ENCODE measurements at regions of chr17 and their contacts with region 1.

Region 1: GRCh38 chr17:76397687-76398487 is 13.5 kb downstream of the SPHK1 start:
- DNase-seq: peak; percentile 68
- ATAC-seq: peak; percentile 91
- H3K4me3 ChIP-seq: no peak overlapping the region
- H3K27ac ChIP-seq: no peak overlapping the region
- H3K4me1 ChIP-seq: no peaks in the 10 kb centered on the region
- H3K27me3 ChIP-seq: no peaks in the 10 kb centered on the region
- CTCF ChIP-seq: peak; percentile 87 to 100 (median 99)
- POLR2A ChIP-seq: no peak
- RAD21 ChIP-seq: peak; percentile 90

Region 2: DNA sequence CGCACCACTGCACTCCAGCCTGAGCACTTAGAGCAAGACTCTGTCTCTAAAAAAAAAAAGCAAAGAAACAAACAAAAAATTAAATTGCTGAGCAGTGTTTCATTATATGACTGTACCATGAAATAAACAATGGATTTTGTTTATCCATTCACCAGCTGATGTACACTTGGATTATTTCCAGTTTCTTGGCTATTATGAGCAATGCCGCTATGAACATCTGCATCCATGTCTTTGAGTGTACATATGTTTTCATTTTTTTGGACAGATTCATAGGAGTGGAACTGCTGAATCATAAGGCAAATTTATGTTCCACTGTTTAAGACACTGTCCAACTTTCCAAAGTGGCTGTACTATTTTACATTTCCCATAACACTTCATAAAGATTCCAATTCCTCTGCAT is 165.5 kb before region 1 on chr17:
- CTCF ChIA-PET with region 1: no interaction called
- POLR2A ChIA-PET with region 1: no interaction called
- RAD21 ChIA-PET with region 1: no interaction called
- intact Hi-C with region 1: no loop called
- DNase-seq: no peak
- ATAC-seq: no peak
- H3K4me3 ChIP-seq: no peak overlapping the region
- H3K27ac ChIP-seq: no peak overlapping the region
- H3K4me1 ChIP-seq: peaks cover 0 to 7% of the 10 kb centered on the region in 2 experiments; a peak in 1 of 4 replicates
- H3K27me3 ChIP-seq: peaks cover 11% of the 10 kb centered on the region; the same call in 1 of the 2 replicates
- CTCF ChIP-seq: no peak
- POLR2A ChIP-seq: no peak
- RAD21 ChIP-seq: no peak

Region 3: GRCh38 chr17:76271669-76272540 is 126.0 kb before region 1 on chr17:
- CTCF ChIA-PET with region 1: no interaction called
- POLR2A ChIA-PET with region 1: no interaction called
- RAD21 ChIA-PET with region 1: no interaction called
- intact Hi-C with region 1: no loop called
- DNase-seq: no peak
- ATAC-seq: peak; percentile 15; the same call in 1 of the 2 replicates
- H3K4me3 ChIP-seq: no peak overlapping the region
- H3K27ac ChIP-seq: no peak overlapping the region; the same call in 1 of the 2 replicates
- H3K4me1 ChIP-seq: peaks cover 0 to 14% of the 10 kb centered on the region in 2 experiments; a peak in 3 of 4 replicates
- H3K27me3 ChIP-seq: no peaks in the 10 kb centered on the region
- CTCF ChIP-seq: no peak
- POLR2A ChIP-seq: no peak
- RAD21 ChIP-seq: no peak

Region 4: GRCh38 chr17:76304226-76305134 is 93.4 kb before region 1 on chr17:
- CTCF ChIA-PET with region 1: interaction called, 55 read pairs
- POLR2A ChIA-PET with region 1: interaction called, 3 read pairs
- RAD21 ChIA-PET with region 1: interaction called in 1 of 2 experiments, 3 read pairs
- intact Hi-C with region 1: loop called (anchors 1 kb)
- DNase-seq: no peak
- ATAC-seq: no peak
- H3K4me3 ChIP-seq: no peak overlapping the region
- H3K27ac ChIP-seq: no peak overlapping the region
- H3K4me1 ChIP-seq: no peaks in the 10 kb centered on the region
- H3K27me3 ChIP-seq: no peaks in the 10 kb centered on the region
- CTCF ChIP-seq: no peak
- POLR2A ChIP-seq: no peak
- RAD21 ChIP-seq: no peak

Region 5: DNA sequence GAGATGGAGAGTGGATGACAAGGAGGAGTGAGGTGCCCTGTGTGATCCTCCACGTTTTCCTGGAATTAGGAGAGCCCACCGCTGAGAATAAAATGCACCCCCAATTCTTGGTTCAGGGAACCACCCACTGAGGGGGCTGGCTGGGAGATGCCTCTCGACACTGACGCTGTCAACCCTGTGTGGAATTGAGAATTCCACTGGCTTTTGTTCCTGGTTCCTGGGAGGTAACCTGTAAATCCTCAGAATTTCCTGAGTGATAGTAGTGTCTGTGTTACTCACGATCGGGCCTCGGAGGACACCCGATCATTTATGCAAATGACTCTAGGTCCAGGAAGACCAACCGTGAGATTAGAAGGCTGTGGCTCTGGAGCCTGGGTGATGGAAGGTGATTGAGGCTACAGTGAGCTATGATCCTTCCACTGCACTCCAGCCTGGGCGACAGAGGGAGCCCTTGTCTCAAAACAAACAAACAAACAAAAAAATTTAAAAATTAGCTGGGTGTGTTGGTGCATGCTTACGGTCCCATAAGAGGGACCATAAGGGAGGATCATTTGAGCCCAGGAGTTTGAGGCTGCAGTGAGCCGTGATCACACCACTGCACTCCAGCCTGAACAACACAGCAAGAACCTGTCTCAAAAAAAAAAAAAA is 32.5 kb before region 1 on chr17:
- CTCF ChIA-PET with region 1: interaction called, 64 read pairs
- POLR2A ChIA-PET with region 1: no interaction called
- RAD21 ChIA-PET with region 1: interaction called, 3 to 9 read pairs
- intact Hi-C with region 1: loop called (anchors 2 kb)
- DNase-seq: peak; percentile 57
- ATAC-seq: peak; percentile 93
- H3K4me3 ChIP-seq: no peak overlapping the region; a peak in 1 of 4 replicates
- H3K27ac ChIP-seq: no peak overlapping the region
- H3K4me1 ChIP-seq: peaks cover 10 to 16% of the 10 kb centered on the region in 2 experiments; a peak in 3 of 4 replicates
- H3K27me3 ChIP-seq: no peaks in the 10 kb centered on the region
- CTCF ChIP-seq: peak; percentile 80 to 81 (median 80)
- POLR2A ChIP-seq: no peak
- RAD21 ChIP-seq: peak; percentile 73

Region 6: GRCh38 chr17:76384222-76384986 is 13.5 kb before region 1 on chr17 and contains the start of gene SPHK1:
- CTCF ChIA-PET with region 1: interaction called, 37 read pairs
- POLR2A ChIA-PET with region 1: no interaction called
- RAD21 ChIA-PET with region 1: no interaction called
- intact Hi-C with region 1: no loop called
- DNase-seq: peak; percentile 51
- ATAC-seq: peak; percentile 82
- H3K4me3 ChIP-seq: peak within 1 kb of the TSS; percentile 56 to 73
- H3K27ac ChIP-seq: peak within 1 kb of the TSS; percentile 45; the same call in 1 of the 2 replicates
- H3K4me1 ChIP-seq: peaks cover 26 to 41% of the 10 kb centered on the region in 2 experiments
- H3K27me3 ChIP-seq: peaks cover 11% of the 10 kb centered on the region; the same call in 1 of the 2 replicates
- CTCF ChIP-seq: no peak
- POLR2A ChIP-seq: peak; percentile 53
- RAD21 ChIP-seq: no peak
- total RNA-seq, gene SPHK1: 4.6 TPM

Region 7: DNA sequence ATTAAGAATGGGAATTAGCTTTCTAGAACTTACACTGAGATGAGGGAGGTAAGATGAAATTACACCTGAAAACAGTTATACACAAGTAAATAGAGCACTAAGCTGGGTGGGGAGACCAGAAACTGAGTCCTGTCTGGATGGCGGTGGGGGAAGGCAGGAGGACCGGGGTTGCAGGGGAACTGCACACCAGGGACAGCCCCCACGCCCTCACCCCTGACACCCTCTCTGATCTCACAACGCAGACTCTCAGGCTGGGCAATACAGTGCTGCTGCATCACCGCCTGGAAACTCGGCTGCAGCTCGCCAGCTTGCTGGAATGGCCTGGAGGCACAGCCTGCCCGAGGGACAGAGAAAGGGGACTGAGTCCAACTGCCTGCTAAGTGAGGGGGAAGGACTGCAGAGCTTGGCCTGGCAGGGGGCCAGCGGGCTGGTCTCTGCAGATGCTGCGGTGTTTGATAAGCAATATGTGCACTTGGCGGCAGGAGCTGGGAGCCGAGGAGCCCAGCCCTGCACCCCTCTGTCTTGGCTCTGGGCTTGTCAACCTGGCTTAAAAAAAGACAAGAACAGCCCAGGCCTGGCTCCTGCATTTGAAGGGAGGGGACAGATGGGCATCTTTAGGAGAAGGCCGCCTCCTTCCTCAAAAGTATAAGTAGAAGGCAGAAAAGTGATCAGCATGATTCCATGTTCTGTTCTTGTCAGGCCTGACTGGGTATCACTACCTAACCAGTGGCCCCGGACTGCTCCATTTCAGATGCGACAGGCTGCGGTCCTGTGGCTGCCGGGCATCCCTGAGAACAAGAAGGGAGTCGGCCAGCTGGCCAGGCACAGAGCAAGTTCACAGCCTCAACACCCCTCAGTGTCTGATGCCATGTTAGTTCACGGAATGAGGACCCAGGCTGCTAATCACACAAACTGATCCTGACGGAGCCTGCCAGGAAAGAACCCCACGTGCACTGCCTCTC is 16.7 kb after region 1 on chr17:
- CTCF ChIA-PET with region 1: interaction called, 10 read pairs
- POLR2A ChIA-PET with region 1: no interaction called
- RAD21 ChIA-PET with region 1: no interaction called
- intact Hi-C with region 1: no loop called
- DNase-seq: no peak
- ATAC-seq: no peak
- H3K4me3 ChIP-seq: no peak overlapping the region
- H3K27ac ChIP-seq: no peak overlapping the region
- H3K4me1 ChIP-seq: no peaks in the 10 kb centered on the region; a peak in 1 of 4 replicates
- H3K27me3 ChIP-seq: no peaks in the 10 kb centered on the region
- CTCF ChIP-seq: no peak
- POLR2A ChIP-seq: no peak
- RAD21 ChIP-seq: no peak

Measured in HCT116 (cell line).